ENCODE measurements at regions of chr15 and their contacts with region 1.

Region 1: DNA sequence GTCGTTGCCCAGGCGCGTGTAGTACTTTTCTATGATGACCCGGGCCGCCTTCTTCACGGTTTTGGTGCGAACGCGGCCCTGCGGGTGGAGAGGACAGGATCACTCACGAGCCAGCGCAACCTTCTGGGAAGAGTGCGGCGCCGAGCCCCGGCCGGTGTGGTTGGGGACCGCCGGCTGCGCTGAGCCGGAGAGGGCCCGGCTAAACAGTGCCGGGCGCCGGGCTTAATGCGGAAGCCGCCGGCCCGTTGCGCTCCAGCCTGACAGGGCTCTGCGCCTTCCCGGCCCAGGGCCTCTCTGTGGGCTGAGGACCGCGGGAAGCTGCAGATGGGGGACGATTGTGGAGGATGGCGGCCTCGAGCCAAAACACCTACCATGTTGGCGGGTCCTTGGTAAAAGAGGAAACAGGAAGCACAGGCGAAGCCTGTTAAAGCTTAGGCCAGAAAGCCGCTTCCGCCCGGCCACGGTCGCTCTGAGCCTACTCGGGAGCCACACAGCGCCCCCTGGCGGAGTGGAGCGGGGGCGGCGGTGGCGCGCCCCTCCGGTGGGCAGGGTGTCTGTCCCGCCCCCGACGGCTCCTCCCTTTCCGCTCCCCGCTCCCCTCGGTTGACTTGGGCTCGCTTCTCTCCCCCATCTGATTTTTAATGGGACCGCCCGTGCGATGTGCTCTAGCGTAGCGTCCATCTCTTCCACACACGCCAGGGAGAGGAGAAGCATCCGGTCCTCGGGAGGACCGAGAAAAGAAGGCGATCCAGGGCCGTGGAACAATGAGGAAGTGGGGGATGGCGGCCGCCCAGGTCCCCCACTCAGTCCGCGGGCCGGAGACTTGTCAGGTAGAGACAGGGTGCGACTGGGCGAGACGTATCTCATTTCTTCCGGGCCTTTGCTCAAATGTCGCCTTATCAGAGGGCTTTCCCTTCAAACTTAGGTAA is at the start of gene RPS17:
- DNase-seq: peak; percentile 82
- ATAC-seq: peak; percentile 97
- H3K4me3 ChIP-seq: peak within 1 kb of the TSS; percentile 94 to 97
- H3K27ac ChIP-seq: peak within 1 kb of the TSS; percentile 96
- H3K4me1 ChIP-seq: peaks cover 15% of the 10 kb centered on the region
- H3K27me3 ChIP-seq: no peaks in the 10 kb centered on the region
- CTCF ChIP-seq: peak; percentile 99
- total RNA-seq, gene RPS17: 1,598 TPM

Region 2: DNA sequence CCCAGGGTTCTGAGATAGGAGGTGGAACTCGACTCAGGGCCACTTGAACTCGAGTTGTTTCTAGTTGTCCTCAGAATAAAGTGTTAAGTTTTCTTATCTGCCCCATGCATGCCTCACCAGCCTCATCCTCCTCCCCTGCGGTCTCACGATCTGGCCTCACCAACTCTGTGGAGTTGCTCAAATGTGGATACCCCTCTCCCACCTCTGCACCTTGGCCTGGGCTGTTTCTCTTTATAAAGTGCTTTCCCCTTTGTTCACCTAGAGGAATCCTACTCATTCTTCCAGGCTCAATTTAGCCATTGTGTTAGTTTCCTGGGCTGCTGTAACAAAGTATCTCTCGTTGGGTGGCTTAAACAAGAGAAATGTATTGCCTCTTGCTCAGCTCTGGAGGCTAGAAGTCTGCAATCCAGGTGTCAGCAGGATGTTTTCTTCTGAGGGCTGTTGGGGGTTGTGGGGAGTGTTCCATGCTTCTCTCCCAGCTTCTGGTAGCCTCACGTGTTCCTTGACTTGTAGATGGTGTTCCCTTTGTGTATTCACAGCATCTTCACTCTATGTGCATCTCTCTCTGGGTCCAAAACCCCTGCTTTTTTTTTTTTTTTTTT is 595.2 kb before region 1 on chr15:
- CTCF ChIA-PET with region 1: interaction called, 13 read pairs
- POLR2A ChIA-PET with region 1: no interaction called
- in situ Hi-C with region 1: no loop called
- intact Hi-C with region 1: no loop called
- DNase-seq: no peak
- ATAC-seq: no peak
- H3K4me3 ChIP-seq: no peak overlapping the region
- H3K27ac ChIP-seq: no peak overlapping the region
- H3K4me1 ChIP-seq: no peaks in the 10 kb centered on the region
- H3K27me3 ChIP-seq: no peaks in the 10 kb centered on the region
- CTCF ChIP-seq: no peak

Region 3: DNA sequence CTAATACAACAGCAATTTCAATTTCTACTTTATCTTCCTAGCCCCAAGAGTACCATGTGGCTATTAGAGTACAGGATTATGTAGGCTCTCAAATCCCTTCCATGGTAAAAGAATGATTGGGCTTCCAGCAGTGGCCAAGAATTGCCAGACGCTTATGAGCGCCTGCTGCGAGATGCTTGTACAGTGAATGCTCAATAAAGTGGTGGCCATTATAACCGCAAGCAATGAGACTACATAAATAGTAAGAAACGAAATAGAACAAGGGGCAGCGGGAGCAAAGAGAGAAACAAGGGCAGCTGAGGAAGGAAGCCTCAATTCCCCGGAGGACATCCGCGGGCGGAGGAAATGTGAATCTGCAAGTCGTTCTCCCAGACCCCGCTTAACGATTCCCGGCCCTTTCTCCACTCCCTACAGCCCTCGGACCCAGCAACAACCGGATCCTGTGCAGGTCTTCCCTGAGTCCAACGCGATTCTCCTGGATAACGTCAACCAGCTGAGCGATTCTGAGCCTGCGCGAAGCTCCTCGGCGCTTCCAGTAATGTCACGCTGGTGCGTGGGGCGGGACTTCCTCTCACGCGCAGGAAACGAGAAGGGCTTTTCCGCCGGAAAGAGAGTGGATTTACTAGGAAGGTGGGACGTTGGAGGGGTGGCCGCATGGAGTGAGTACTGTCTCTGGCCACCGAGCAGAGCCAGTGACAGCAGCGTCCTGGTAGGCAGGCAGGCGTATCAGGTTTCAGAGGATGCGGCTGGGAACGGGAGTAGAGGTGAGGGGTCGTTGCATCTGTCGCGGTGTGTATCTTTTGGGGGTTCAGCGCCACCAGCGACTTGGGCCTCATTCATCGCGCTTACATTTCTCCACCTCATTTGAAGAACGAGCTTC is 209.9 kb after region 1 on chr15:
- CTCF ChIA-PET with region 1: no interaction called
- POLR2A ChIA-PET with region 1: no interaction called
- in situ Hi-C with region 1: no loop called
- intact Hi-C with region 1: loop called (anchors 10 kb)
- DNase-seq: peak; percentile 85
- ATAC-seq: peak; percentile 98
- H3K4me3 ChIP-seq: peak overlapping the region; percentile 93 to 97
- H3K27ac ChIP-seq: peak overlapping the region; percentile 97
- H3K4me1 ChIP-seq: peaks cover 12% of the 10 kb centered on the region
- H3K27me3 ChIP-seq: no peaks in the 10 kb centered on the region
- CTCF ChIP-seq: no peak

Region 4: GRCh38 chr15:82849556-82850512 is 309.5 kb after region 1 on chr15:
- CTCF ChIA-PET with region 1: interaction called, 10 read pairs
- POLR2A ChIA-PET with region 1: no interaction called
- in situ Hi-C with region 1: no loop called
- intact Hi-C with region 1: no loop called
- DNase-seq: peak; percentile 35
- ATAC-seq: peak; percentile 87
- H3K4me3 ChIP-seq: no peak overlapping the region
- H3K27ac ChIP-seq: no peak overlapping the region
- H3K4me1 ChIP-seq: no peaks in the 10 kb centered on the region
- H3K27me3 ChIP-seq: no peaks in the 10 kb centered on the region
- CTCF ChIP-seq: peak; percentile 85

Region 5: DNA sequence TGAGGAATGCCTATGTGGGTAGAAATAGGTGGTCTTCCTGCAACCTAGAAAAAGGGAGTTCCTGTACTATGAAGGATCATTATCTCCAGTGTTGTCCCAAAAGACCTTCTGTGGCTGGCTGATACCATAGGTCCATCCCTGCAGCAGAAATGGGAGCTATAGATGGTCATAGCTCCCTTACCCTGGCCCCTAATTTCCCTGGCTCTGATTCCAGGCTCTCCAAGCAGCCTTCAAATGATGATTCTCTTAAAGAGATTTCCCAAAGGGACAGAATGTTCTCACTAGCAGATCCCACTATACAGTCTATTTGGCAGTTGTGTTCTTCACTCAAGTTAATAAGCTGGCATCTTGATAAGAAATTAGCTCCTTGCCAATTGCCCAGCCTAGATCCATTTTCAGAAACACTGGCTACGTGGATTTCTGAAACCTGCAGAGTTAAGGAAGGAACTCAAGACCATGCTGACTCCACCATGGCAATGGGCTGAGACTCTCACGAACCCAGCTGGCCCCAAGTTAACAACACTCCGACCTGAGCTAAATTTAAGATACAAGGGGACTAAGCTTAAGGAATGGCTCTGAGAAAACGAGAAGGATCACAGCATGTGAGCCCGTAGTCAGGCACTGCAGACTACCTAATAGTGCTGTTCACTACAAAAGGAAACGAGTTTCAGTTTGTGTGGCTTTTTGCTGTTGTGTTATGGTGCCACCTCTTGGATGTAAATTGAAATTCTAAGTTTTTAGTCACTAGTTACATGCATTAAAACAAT is 459.8 kb after region 1 on chr15:
- CTCF ChIA-PET with region 1: no interaction called
- POLR2A ChIA-PET with region 1: no interaction called
- in situ Hi-C with region 1: no loop called
- intact Hi-C with region 1: loop called (anchors 2 kb)
- DNase-seq: peak; percentile 51
- ATAC-seq: peak; percentile 82
- H3K4me3 ChIP-seq: peak overlapping the region; percentile 25 to 52
- H3K27ac ChIP-seq: peak overlapping the region; percentile 58
- H3K4me1 ChIP-seq: no peaks in the 10 kb centered on the region
- H3K27me3 ChIP-seq: no peaks in the 10 kb centered on the region
- CTCF ChIP-seq: peak; percentile 80

Measured in Panc1 (cell line).